Activated T-helper 2 cell treated with anti-CD3 and anti-CD28 coated beads, Interferon-gamma antibody, Interleukin-2, Interleukin-4, amounts not matched to agents 10 μg/mL and 5 μg/mL and 100 μg/mL, durations not matched to agents 14 hours and 24 hours and 36 hours (primary cell): ENCODE measurements at regions of chr6 and their contacts with region 1.

Region 1: GRCh38 chr6:37499433-37500293 is at the start of gene CCDC167:
- DNase-seq: peak; percentile 96
- H3K4me3 Mint-ChIP-seq: peak within 1 kb of the TSS; percentile 93
- H3K27ac Mint-ChIP-seq: peak within 1 kb of the TSS; percentile 96
- H3K4me1 Mint-ChIP-seq: peaks cover 64% of the 10 kb centered on the region
- H3K27me3 Mint-ChIP-seq: no peaks in the 10 kb centered on the region
- total RNA-seq, gene CCDC167: 69.8 and 76.9 TPM in 2 replicates

Region 2: GRCh38 chr6:37483917-37484785 is 15.5 kb before region 1 on chr6:
- intact Hi-C with region 1: no loop called
- DNase-seq: peak; percentile 52
- H3K4me3 Mint-ChIP-seq: no peak overlapping the region
- H3K27ac Mint-ChIP-seq: no peak overlapping the region
- H3K4me1 Mint-ChIP-seq: peaks cover 8% of the 10 kb centered on the region
- H3K27me3 Mint-ChIP-seq: no peaks in the 10 kb centered on the region

Region 3: DNA sequence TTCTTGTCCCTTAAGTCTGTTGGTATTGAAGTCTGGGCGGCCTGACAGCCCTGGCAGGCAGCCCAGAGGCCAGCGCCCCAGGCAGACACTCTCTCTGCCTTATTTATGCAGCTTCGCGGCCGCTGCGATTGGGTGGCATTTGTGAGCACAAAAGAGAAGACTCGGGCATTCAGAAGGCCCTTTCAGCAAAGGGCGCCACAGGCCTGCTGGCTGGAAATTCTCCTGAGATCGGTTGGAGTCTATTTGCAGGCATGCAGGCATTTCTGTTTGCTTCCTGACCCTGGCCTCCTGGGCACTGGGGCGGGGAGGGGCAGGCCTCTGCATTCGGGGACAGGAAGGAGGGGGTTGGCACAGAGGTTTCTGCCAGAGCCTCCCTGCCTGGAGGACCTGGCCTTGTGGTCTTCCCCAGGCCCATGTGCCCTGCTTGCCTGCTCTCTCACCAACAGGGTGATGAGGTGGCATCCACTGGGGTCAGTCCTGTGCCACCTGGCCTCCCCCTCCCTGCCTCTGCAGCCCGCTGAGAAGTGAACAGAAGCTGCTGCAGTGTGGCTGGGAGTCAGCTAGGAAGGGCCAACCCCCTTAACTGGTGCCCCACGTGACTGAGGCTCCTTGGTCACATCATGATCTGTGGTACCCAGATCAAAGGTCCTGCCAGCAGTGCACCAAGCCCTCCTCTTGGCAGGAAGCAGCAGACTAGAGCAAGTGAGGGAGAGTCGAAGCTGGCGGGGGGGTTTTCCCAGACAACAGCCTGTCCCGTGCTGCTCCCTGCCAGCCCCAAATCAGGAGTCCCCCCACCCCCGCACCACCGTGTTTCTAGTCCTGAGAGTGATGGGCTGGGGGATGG is 16.6 kb after region 1 on chr6:
- intact Hi-C with region 1: loop called (anchors 1 kb)
- DNase-seq: peak; percentile 79
- H3K4me3 Mint-ChIP-seq: peak overlapping the region; percentile 69
- H3K27ac Mint-ChIP-seq: peak overlapping the region; percentile 86
- H3K4me1 Mint-ChIP-seq: peaks cover 52% of the 10 kb centered on the region
- H3K27me3 Mint-ChIP-seq: no peaks in the 10 kb centered on the region

Region 4: GRCh38 chr6:37698261-37699137 is 198.8 kb after region 1 on chr6:
- intact Hi-C with region 1: loop called (anchors 5 kb)
- DNase-seq: peak; percentile 55
- H3K4me3 Mint-ChIP-seq: peak overlapping the region; percentile 99
- H3K27ac Mint-ChIP-seq: peak overlapping the region; percentile 95
- H3K4me1 Mint-ChIP-seq: peaks cover 23% of the 10 kb centered on the region
- H3K27me3 Mint-ChIP-seq: peaks cover 57% of the 10 kb centered on the region